ENCODE measurements at regions of chr9 and their contacts with region 1.

Region 1: GRCh38 chr9:37485389-37486219 is at the start of gene POLR1E:
- DNase-seq: peak; percentile 99
- ATAC-seq: peak; percentile 98
- H3K4me3 Mint-ChIP-seq: peak within 1 kb of the TSS; percentile 92
- H3K27ac Mint-ChIP-seq: peak within 1 kb of the TSS; percentile 85
- H3K4me1 Mint-ChIP-seq: peaks cover 31% of the 10 kb centered on the region
- H3K27me3 Mint-ChIP-seq: no peaks in the 10 kb centered on the region
- CTCF ChIP-seq: no peak
- total RNA-seq, gene POLR1E: 45.4 and 46.3 TPM in 2 replicates

Region 2: DNA sequence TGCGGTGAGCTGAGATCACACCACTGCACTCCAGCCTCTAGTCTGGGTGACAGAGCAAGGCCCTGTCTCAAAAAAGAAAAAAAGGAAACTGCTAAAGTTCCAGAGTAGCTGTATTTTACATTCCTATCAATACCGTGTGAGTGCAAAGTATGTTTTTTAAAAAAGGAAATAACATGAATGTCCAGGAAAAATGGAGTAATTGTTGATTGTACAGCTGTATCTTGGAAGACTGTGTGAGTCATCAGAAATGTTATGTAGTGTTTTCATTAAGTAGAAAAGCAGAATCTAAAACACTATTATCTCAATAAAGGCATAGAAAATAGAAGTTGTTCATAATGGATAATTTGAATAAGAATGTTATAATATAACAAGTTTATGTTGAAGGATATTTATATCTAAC is 311.4 kb before region 1 on chr9:
- CTCF ChIA-PET with region 1: no interaction called
- POLR2A ChIA-PET with region 1: no interaction called
- intact Hi-C with region 1: no loop called
- DNase-seq: no peak
- ATAC-seq: no peak
- H3K4me3 Mint-ChIP-seq: no peak overlapping the region
- H3K27ac Mint-ChIP-seq: peak overlapping the region; percentile 9
- H3K4me1 Mint-ChIP-seq: peaks cover 42% of the 10 kb centered on the region
- H3K27me3 Mint-ChIP-seq: no peaks in the 10 kb centered on the region
- CTCF ChIP-seq: no peak

Region 3: DNA sequence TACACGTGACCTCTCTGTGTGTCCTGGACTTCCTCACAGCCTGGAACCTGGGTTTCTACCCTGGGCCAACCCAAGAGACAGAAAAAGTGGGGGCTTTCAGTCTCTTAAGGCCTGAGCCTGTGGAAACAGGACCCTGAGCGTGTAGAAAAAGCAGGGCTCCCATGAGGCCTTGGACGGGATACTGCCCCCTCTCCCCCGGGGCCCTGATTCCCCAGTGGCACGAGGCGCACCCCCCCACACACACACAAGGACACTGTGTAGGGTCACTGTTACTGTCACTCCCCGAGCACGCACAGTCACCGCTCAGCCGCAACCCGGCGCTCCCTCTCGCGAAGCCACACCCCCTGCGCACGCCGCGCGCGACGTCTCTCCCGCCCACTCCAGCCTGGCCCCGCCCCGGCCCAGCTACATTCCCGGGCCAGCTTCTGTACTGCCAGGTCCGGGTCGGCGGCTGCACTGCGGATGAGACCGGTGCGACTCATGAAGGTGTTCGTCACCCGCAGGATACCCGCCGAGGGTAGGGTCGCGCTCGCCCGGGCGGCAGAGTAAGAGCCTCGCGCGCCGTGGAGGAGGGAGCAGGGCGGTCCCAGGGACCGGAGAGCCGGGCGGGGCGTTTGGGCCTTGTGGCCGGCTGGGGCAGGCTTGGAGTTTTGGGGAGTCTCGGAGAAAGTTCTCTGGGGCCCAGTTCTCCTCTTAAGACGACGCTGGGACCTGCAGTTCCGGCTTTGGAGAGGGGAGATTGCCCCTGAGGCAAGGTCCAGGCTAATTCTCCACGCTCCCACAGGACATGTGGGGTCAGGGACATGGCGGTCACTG is 63.1 kb before region 1 on chr9 and contains the start of gene GRHPR:
- CTCF ChIA-PET with region 1: no interaction called
- POLR2A ChIA-PET with region 1: interaction called, 3 read pairs
- intact Hi-C with region 1: loop called (anchors 1 kb)
- DNase-seq: peak; percentile 90
- ATAC-seq: peak; percentile 98
- H3K4me3 Mint-ChIP-seq: peak within 1 kb of the TSS; percentile 96
- H3K27ac Mint-ChIP-seq: peak within 1 kb of the TSS; percentile 93
- H3K4me1 Mint-ChIP-seq: peaks cover 40% of the 10 kb centered on the region
- H3K27me3 Mint-ChIP-seq: no peaks in the 10 kb centered on the region
- CTCF ChIP-seq: no peak
- total RNA-seq, gene GRHPR: 315 TPM in 2 replicates

Region 4: DNA sequence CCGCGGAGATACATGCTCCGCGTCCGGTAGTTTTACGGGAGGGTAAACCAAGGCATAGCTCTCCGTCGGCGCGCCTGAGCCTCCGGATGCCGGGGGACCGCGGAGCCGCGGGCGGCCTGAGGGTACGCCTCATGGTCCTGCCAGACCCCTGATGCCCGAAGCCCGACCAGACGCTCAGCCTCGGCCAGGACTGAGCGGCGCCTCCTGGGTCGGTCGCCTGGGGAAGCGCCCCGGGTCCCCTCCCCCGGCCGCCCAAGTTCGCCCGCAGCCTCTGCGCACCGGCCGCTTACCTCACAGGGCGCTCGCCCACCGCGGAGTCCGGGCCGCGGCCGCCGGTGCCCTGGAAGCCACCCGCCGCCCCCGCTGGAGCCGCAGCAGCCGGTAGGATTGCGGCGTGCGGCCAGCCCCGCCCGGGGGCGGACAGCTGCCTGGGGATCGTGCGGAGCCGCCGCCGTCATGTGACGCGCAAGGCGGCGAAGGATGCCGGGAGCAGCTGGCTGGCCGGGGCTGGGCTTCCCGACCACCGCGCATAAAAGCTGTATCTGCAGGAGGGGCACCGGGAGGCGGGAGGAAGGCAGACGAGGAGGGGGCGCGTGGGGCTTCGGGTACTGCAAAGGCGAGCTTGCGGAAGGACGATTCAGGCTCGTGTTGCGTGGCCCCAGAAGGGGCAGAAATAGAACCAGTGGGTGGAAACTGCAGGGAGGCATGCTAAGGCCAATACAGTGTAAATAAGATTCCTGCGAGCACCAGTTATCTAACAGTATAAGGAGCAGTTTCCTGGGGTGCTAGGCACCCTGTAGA is 90.5 kb after region 1 on chr9 and contains the start of gene FBXO10:
- CTCF ChIA-PET with region 1: interaction called, 3 read pairs
- POLR2A ChIA-PET with region 1: interaction called, 4 read pairs
- intact Hi-C with region 1: loop called (anchors 5 kb)
- DNase-seq: peak; percentile 65
- ATAC-seq: peak; percentile 72
- H3K4me3 Mint-ChIP-seq: peak within 1 kb of the TSS; percentile 92
- H3K27ac Mint-ChIP-seq: peak within 1 kb of the TSS; percentile 89
- H3K4me1 Mint-ChIP-seq: peaks cover 47% of the 10 kb centered on the region
- H3K27me3 Mint-ChIP-seq: no peaks in the 10 kb centered on the region
- CTCF ChIP-seq: no peak
- total RNA-seq, gene FBXO10: 29.8 and 39.4 TPM in 2 replicates

Region 5: DNA sequence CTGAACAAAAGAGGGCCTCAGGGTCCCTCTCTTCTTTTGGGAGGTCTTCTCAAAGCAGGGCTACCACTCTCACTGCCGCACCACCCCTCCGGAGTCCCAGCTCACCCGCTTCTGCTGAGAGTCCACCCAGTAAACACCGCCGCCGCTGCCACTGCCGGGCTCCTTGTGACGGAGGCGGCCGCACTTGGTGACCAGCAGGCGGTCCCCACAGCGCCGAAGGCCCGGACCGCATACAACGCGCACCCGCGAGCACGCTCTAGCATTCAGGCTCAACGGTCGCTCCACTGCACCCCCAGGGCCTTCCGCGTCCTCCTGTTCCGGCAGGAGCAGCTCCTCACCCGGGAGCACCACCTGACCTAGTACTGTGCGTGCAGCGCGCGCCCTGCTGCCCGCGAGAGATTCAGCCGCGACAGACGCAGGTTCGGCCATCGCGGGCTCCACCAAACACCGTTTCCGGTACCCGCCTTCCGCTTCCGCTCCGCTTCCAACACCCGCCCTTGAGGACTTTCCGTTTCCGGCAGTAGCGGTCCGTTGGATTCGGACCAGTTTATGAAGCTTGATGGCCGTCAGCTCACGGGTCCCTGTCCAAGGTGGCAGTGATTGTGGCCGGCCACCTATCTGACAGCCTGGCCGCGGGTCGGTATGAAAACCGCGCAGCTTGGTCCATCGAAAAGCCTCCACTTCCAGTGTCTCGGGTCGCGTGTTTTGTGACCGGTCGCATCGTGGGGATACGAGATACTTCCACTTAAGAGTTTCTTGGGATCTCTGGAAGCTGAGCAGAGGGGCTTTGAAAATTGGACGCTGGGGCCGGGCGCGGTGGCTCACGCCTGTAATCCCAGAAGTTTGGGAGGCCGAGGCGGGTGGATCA is 299.2 kb after region 1 on chr9 and contains the start of gene EXOSC3:
- CTCF ChIA-PET with region 1: no interaction called
- POLR2A ChIA-PET with region 1: no interaction called
- intact Hi-C with region 1: loop called (anchors 10 kb)
- DNase-seq: peak; percentile 83
- ATAC-seq: peak; percentile 87
- H3K4me3 Mint-ChIP-seq: peak within 1 kb of the TSS; percentile 98
- H3K27ac Mint-ChIP-seq: peak within 1 kb of the TSS; percentile 93
- H3K4me1 Mint-ChIP-seq: peaks cover 35% of the 10 kb centered on the region
- H3K27me3 Mint-ChIP-seq: no peaks in the 10 kb centered on the region
- CTCF ChIP-seq: no peak
- total RNA-seq, gene EXOSC3: 63.8 and 69.9 TPM in 2 replicates

Region 6: GRCh38 chr9:38088006-38088925 is 602.7 kb after region 1 on chr9:
- CTCF ChIA-PET with region 1: no interaction called
- POLR2A ChIA-PET with region 1: no interaction called
- intact Hi-C with region 1: loop called (anchors 10 kb)
- DNase-seq: peak; percentile 64
- ATAC-seq: peak; percentile 73
- H3K4me3 Mint-ChIP-seq: no peak overlapping the region
- H3K27ac Mint-ChIP-seq: no peak overlapping the region
- H3K4me1 Mint-ChIP-seq: no peaks in the 10 kb centered on the region
- H3K27me3 Mint-ChIP-seq: peaks cover 15% of the 10 kb centered on the region
- CTCF ChIP-seq: peak; percentile 74

Measured in activated B cell treated with CpG ODN at 0.5 μM for 24 hours (primary cell).